IMR-90 (cell line): ENCODE measurements at regions of chr9 and their contacts with region 1.

Region 1: GRCh38 chr9:35954942-35955546 is 2.9 kb downstream of the OR2S2 start:
- DNase-seq: peak; percentile 90
- ATAC-seq: peak; percentile 91
- H3K4me3 ChIP-seq: no peak overlapping the region
- H3K27ac ChIP-seq: no peak overlapping the region
- H3K4me1 ChIP-seq: peaks cover 13% of the 10 kb centered on the region
- H3K27me3 ChIP-seq: no peaks in the 10 kb centered on the region
- CTCF ChIP-seq: peak; percentile 91
- POLR2A ChIP-seq: 0 out of 2 replicates have a peak, but pooled peaks have one; percentile 54
- RAD21 ChIP-seq: peak; percentile 95

Region 2: GRCh38 chr9:36023260-36024048 is 68.4 kb after region 1 on chr9:
- CTCF ChIA-PET with region 1: interaction called, 11 read pairs
- POLR2A ChIA-PET with region 1: no interaction called
- dilution Hi-C with region 1: no loop called
- in situ Hi-C with region 1: loop called (anchors 5 kb)
- intact Hi-C with region 1: loop called (anchors 1 kb)
- DNase-seq: peak; percentile 78
- ATAC-seq: peak; percentile 65
- H3K4me3 ChIP-seq: no peak overlapping the region
- H3K27ac ChIP-seq: no peak overlapping the region
- H3K4me1 ChIP-seq: peaks cover 16% of the 10 kb centered on the region
- H3K27me3 ChIP-seq: no peaks in the 10 kb centered on the region
- CTCF ChIP-seq: peak; percentile 79
- POLR2A ChIP-seq: no peak
- RAD21 ChIP-seq: peak; percentile 90

Region 3: DNA sequence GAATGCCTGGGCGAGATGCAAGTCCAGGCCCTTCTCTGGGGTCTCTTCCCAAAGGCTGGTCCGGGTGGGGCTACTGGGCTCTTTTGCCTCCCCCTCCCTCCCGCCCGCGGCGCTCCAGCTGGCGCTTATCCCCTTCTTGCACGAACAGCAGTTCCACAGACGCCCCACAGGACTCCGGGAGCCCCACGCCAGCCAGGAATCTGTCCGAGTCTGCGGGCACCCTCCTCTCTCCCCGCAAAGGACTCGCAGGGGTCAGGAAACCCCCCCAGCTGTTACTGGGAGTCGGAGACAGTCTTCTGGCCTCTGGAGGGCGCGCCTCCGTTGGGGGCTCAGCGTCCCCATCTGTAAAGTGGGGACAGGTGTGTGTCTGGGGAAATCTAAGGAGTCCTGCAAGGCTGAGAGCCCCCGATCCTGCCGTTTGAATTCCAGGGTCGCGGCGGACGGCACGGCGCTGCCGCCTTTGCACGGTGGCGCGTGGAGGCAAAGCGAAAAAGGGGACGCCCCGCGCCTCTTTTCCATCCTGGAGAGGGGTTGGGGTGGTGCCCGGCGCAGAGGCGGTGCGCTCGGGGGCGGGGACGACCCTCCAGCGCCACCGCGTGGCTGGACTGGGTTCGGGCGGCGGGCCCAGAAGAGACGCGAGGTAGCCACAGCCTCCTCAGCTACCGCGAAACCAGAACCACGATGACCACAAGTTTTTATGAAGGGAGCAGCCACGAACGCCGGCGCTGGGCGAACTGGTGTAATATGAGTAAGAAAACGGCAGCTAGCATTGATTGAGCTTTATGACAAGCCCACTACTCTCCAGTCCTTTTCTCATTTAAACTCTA is 211.3 kb after region 1 on chr9:
- CTCF ChIA-PET with region 1: interaction called, 4 read pairs
- POLR2A ChIA-PET with region 1: no interaction called
- dilution Hi-C with region 1: no loop called
- in situ Hi-C with region 1: loop called (anchors 10 kb)
- intact Hi-C with region 1: loop called (anchors 1 kb)
- DNase-seq: peak; percentile 81
- ATAC-seq: peak; percentile 91
- H3K4me3 ChIP-seq: peak overlapping the region; percentile 55
- H3K27ac ChIP-seq: peak overlapping the region; percentile 35
- H3K4me1 ChIP-seq: peaks cover 29% of the 10 kb centered on the region
- H3K27me3 ChIP-seq: no peaks in the 10 kb centered on the region; the same call in 1 of the 2 replicates
- CTCF ChIP-seq: peak; percentile 92
- POLR2A ChIP-seq: 0 out of 2 replicates have a peak, but pooled peaks have one; percentile 28
- RAD21 ChIP-seq: peak; percentile 93

Region 4: GRCh38 chr9:36204906-36205547 is 250.0 kb after region 1 on chr9:
- CTCF ChIA-PET with region 1: no interaction called
- POLR2A ChIA-PET with region 1: no interaction called
- dilution Hi-C with region 1: no loop called
- in situ Hi-C with region 1: no loop called
- intact Hi-C with region 1: loop called (anchors 5 kb)
- DNase-seq: no peak
- ATAC-seq: 0 out of 2 replicates have a peak, but pooled peaks have one; percentile 13
- H3K4me3 ChIP-seq: no peak overlapping the region
- H3K27ac ChIP-seq: no peak overlapping the region
- H3K4me1 ChIP-seq: peaks cover 20% of the 10 kb centered on the region
- H3K27me3 ChIP-seq: no peaks in the 10 kb centered on the region
- CTCF ChIP-seq: peak; percentile 21; the same call in 1 of the 2 replicates
- POLR2A ChIP-seq: no peak
- RAD21 ChIP-seq: no peak

Region 5: DNA sequence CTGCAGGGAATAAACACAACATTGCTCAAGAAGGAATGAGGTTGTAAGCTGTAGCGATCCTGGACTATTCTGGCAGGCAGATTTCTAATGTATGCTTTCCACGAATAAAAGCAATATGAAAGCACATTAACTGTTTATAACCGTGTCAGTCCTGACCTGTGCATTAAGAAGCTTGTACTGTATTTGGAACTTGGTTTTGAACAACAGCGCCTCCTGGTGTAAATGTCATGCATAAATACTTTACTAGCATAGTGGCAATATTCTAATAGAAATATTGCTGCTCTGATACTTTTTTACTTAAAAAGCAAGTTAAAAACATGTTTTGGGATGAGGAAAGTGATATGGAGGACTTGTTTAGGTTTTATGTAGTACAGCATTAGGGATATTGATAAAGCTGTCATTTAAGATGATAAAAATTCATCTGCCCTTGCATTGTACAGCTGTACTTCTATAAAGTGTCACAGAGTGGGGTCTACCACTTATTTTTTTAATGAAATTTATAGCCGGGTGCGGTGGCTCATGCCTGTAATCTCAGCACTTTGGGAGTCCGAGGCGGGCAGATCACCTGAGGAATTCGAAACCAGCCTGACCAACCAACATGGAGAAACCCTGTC is 373.9 kb after region 1 on chr9:
- CTCF ChIA-PET with region 1: no interaction called
- POLR2A ChIA-PET with region 1: no interaction called
- dilution Hi-C with region 1: no loop called
- in situ Hi-C with region 1: no loop called
- intact Hi-C with region 1: loop called (anchors 10 kb)
- DNase-seq: peak; percentile 80
- ATAC-seq: peak; percentile 71
- H3K4me3 ChIP-seq: peak overlapping the region; percentile 4; the same call in 1 of the 2 replicates
- H3K27ac ChIP-seq: no peak overlapping the region
- H3K4me1 ChIP-seq: peaks cover 3% of the 10 kb centered on the region
- H3K27me3 ChIP-seq: no peaks in the 10 kb centered on the region
- CTCF ChIP-seq: peak; percentile 80
- POLR2A ChIP-seq: no peak
- RAD21 ChIP-seq: peak; percentile 80

Region 6: DNA sequence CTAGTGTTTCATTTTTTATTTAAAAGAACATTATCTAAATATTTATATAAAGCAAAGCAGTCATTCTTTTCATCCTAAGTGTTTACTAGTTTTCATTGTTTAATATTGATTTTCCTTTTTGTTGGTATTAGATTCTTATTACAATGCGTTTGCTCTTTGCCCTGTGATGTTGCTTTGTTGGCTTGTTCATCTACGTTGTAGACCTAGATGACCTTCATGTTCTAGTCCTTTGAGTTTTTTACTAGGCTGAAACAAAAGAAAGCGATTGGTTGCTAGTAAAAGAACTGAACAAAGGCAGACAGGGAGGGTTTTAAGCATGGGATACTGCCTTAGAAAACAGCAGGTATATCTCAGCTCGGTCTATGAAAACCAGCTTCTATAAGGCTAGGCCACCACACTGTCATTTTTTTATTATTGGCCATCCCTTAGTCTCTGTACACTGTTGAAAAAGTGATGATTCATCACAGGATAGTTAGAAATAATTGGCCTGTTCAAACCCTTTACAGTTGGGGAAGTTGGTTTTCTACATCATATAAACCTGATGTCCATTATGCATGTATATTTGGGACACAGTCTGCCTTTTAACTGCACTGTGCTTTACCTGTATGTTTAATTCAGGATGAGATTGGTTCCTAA is 1284.3 kb after region 1 on chr9:
- CTCF ChIA-PET with region 1: no interaction called
- POLR2A ChIA-PET with region 1: no interaction called
- dilution Hi-C with region 1: no loop called
- in situ Hi-C with region 1: no loop called
- intact Hi-C with region 1: no loop called
- DNase-seq: no peak
- ATAC-seq: peak; percentile 49; the same call in 1 of the 2 replicates
- H3K4me3 ChIP-seq: no peak overlapping the region
- H3K27ac ChIP-seq: no peak overlapping the region
- H3K4me1 ChIP-seq: 0 out of 2 replicates have a peak, but pooled peaks cover 2% of the 10 kb centered on the region
- H3K27me3 ChIP-seq: no peaks in the 10 kb centered on the region
- CTCF ChIP-seq: no peak
- POLR2A ChIP-seq: no peak
- RAD21 ChIP-seq: no peak